Heart right ventricle (tissue), 16 donors: ENCODE measurements at regions of chr20 and their contacts with region 1.

Region 1: GRCh38 chr20:53395188-53395923 is 198.3 kb downstream of the ZNF217 start:
- DNase-seq: no peak
- ATAC-seq: peak; percentile 65 to 94 (median 85)
- H3K4me3 ChIP-seq: no peak overlapping the region
- H3K27ac ChIP-seq: peak overlapping the region; percentile 18 to 75 (median 62)
- H3K4me1 ChIP-seq: peaks cover 0 to 18% (median 6%) of the 10 kb centered on the region in 9 donors
- H3K27me3 ChIP-seq: no peaks in the 10 kb centered on the region
- CTCF ChIP-seq: no peak

Region 2: GRCh38 chr20:53408691-53409446 is 13.5 kb after region 1 on chr20:
- intact Hi-C with region 1: loop called in 1 of 10 experiments (anchors 2 kb)
- DNase-seq: no peak
- ATAC-seq: peak in 6 of 8 donors; percentile 48 to 69 (median 56)
- H3K4me3 ChIP-seq: no peak overlapping the region
- H3K27ac ChIP-seq: peak overlapping the region in 5 of 10 donors; percentile 8 to 69 (median 25)
- H3K4me1 ChIP-seq: peaks cover 0 to 27% (median 12%) of the 10 kb centered on the region in 9 donors
- H3K27me3 ChIP-seq: no peaks in the 10 kb centered on the region
- CTCF ChIP-seq: no peak